Caco-2 (cell line): ENCODE measurements at regions of chr18 and their contacts with region 1.

Region 1: GRCh38 chr18:9951022-9951859 is 37.4 kb downstream of the VAPA start:
- DNase-seq: peak; percentile 54 to 58
- H3K4me3 ChIP-seq: no peak overlapping the region
- H3K4me3 Mint-ChIP-seq: no peak overlapping the region
- H3K27ac Mint-ChIP-seq: no peak overlapping the region
- H3K4me1 ChIP-seq: no peaks in the 10 kb centered on the region
- H3K4me1 Mint-ChIP-seq: no peaks in the 10 kb centered on the region
- H3K27me3 ChIP-seq: no peaks in the 10 kb centered on the region
- H3K27me3 Mint-ChIP-seq: no peaks in the 10 kb centered on the region
- CTCF ChIP-seq: peak; percentile 68 to 71

Region 2: GRCh38 chr18:9683407-9684396 is 267.5 kb before region 1 on chr18:
- CTCF ChIA-PET with region 1: no interaction called
- POLR2A ChIA-PET with region 1: no interaction called
- intact Hi-C with region 1: loop called (anchors 5 kb)
- DNase-seq: peak; percentile 48 to 51
- H3K4me3 ChIP-seq: no peak overlapping the region
- H3K4me3 Mint-ChIP-seq: no peak overlapping the region
- H3K27ac Mint-ChIP-seq: peak overlapping the region; percentile 5
- H3K4me1 ChIP-seq: peaks cover 12% of the 10 kb centered on the region; the same call in 1 of the 2 replicates
- H3K4me1 Mint-ChIP-seq: peaks cover 11% of the 10 kb centered on the region
- H3K27me3 ChIP-seq: no peaks in the 10 kb centered on the region
- H3K27me3 Mint-ChIP-seq: no peaks in the 10 kb centered on the region
- CTCF ChIP-seq: peak in 1 of 2 experiments; percentile 49

Region 3: DNA sequence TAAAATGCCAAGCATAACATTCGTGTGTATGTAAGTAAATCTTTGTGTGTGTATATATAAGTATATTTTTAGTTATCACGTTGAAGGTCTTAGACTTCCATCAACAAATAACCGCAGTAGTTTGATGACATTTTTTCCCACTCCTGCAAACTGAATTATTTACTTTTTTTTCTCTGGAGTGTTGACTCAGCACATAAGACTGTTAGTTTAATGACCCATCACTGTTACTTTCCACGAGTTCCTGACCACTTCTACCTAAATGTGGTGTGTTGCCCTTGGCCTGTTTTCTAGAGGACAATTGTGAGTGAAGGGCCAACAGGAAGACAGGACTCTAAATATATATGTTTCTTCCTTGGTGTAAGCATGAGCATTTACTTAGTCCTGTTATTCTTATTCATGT is 136.8 kb before region 1 on chr18:
- CTCF ChIA-PET with region 1: no interaction called
- POLR2A ChIA-PET with region 1: no interaction called
- intact Hi-C with region 1: loop called (anchors 5 kb)
- DNase-seq: no peak
- H3K4me3 ChIP-seq: no peak overlapping the region
- H3K4me3 Mint-ChIP-seq: no peak overlapping the region
- H3K27ac Mint-ChIP-seq: no peak overlapping the region
- H3K4me1 ChIP-seq: peaks cover 13% of the 10 kb centered on the region
- H3K4me1 Mint-ChIP-seq: no peaks in the 10 kb centered on the region
- H3K27me3 ChIP-seq: no peaks in the 10 kb centered on the region
- H3K27me3 Mint-ChIP-seq: no peaks in the 10 kb centered on the region
- CTCF ChIP-seq: no peak